Activated CD4-positive, alpha-beta memory T cell treated with anti-CD3 and anti-CD28 coated beads for 36 hours (primary cell): ENCODE measurements at regions of chrX and their contacts with region 1.

Region 1: DNA sequence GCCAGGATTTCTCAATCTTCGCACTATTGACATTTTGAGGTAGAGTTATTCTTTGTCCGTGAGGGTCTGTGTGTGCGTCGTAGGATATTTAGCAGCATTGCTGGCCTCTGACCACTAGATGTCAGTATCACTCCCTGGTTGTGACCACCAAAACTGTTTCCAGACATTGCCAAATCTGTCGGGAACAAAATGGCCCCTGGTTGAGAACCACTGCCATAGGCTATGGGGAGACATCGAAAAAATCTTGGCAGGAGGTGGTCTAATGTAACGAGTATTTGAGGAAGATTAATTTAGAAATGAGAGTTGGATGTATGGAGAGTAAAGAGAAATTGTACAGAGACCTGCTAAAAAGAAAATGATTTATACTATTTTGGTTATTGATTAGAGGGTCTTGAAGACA is 108.4 kb downstream of the DOCK11 start:
- DNase-seq: peak; percentile 38
- H3K4me3 Mint-ChIP-seq: no peak overlapping the region
- H3K27ac Mint-ChIP-seq: no peak overlapping the region
- H3K4me1 Mint-ChIP-seq: peaks cover 23% of the 10 kb centered on the region
- H3K27me3 Mint-ChIP-seq: no peaks in the 10 kb centered on the region

Region 2: GRCh38 chrX:118189628-118190027 is 414.4 kb before region 1 on chrX:
- CTCF ChIA-PET with region 1: no interaction called
- POLR2A ChIA-PET with region 1: no interaction called
- intact Hi-C with region 1: no loop called
- DNase-seq: no peak
- H3K4me3 Mint-ChIP-seq: no peak overlapping the region
- H3K27ac Mint-ChIP-seq: no peak overlapping the region
- H3K4me1 Mint-ChIP-seq: no peaks in the 10 kb centered on the region
- H3K27me3 Mint-ChIP-seq: no peaks in the 10 kb centered on the region

Region 3: GRCh38 chrX:118459494-118459893 is 144.5 kb before region 1 on chrX:
- CTCF ChIA-PET with region 1: interaction called, 74 read pairs
- POLR2A ChIA-PET with region 1: no interaction called
- intact Hi-C with region 1: loop called (anchors 1 kb)
- DNase-seq: peak; percentile 15
- H3K4me3 Mint-ChIP-seq: no peak overlapping the region
- H3K27ac Mint-ChIP-seq: no peak overlapping the region
- H3K4me1 Mint-ChIP-seq: no peaks in the 10 kb centered on the region
- H3K27me3 Mint-ChIP-seq: no peaks in the 10 kb centered on the region

Region 4: DNA sequence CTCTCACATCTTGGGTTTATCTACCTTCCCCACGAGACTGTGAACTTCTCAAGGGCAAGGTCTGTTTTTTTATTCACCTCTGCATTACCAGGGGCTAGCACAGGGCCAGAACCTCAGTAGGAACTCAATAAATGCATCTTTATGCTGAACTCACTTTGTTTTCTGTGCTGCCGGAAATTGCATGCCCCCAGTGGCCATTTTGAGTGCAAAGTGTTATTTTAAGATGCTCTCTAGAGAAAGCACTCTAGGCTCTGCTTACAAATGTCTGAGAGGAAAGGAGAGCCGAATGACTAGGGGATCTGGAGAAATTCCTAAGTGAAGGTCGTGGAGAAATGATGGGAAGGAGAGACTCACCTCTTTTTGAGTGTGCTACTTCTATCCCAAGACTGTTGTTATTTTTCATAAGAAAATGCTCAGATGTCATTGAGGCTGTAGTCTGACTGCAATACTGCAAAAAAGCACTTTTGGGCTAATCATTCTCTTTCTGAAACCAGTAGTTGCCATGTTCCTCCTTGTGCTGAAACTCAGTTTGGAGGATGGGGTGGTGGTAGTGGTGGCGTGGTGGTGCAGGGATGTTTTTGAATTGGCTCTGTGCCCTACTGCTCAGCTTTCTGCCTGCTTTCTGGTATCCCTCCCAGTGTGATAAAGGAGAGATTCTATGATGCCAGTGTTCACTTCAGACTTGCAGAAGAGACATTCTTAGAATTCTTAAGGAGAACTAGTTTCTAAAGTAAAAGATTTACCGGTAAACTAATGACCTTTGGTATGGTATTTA is 67.1 kb before region 1 on chrX:
- CTCF ChIA-PET with region 1: interaction called, 8 read pairs
- POLR2A ChIA-PET with region 1: no interaction called
- intact Hi-C with region 1: loop called (anchors 5 kb)
- DNase-seq: peak; percentile 64
- H3K4me3 Mint-ChIP-seq: peak overlapping the region; percentile 58
- H3K27ac Mint-ChIP-seq: peak overlapping the region; percentile 92
- H3K4me1 Mint-ChIP-seq: peaks cover 77% of the 10 kb centered on the region
- H3K27me3 Mint-ChIP-seq: no peaks in the 10 kb centered on the region

Region 5: GRCh38 chrX:118562582-118563164 is 41.3 kb before region 1 on chrX:
- CTCF ChIA-PET with region 1: no interaction called
- POLR2A ChIA-PET with region 1: no interaction called
- intact Hi-C with region 1: no loop called
- DNase-seq: no peak
- H3K4me3 Mint-ChIP-seq: no peak overlapping the region
- H3K27ac Mint-ChIP-seq: peak overlapping the region; percentile 40
- H3K4me1 Mint-ChIP-seq: peaks cover 33% of the 10 kb centered on the region
- H3K27me3 Mint-ChIP-seq: no peaks in the 10 kb centered on the region

Region 6: GRCh38 chrX:118614150-118614549 is 10.2 kb after region 1 on chrX:
- CTCF ChIA-PET with region 1: interaction called, 29 read pairs
- POLR2A ChIA-PET with region 1: no interaction called
- intact Hi-C with region 1: no loop called
- DNase-seq: no peak
- H3K4me3 Mint-ChIP-seq: no peak overlapping the region
- H3K27ac Mint-ChIP-seq: no peak overlapping the region
- H3K4me1 Mint-ChIP-seq: peaks cover 2% of the 10 kb centered on the region
- H3K27me3 Mint-ChIP-seq: no peaks in the 10 kb centered on the region